H1 (cell line): ENCODE measurements at regions of chr5 and their contacts with region 1.

Region 1: GRCh38 chr5:134145779-134146581 is 30.8 kb downstream of the SKP1 start:
- DNase-seq: peak; percentile 53 to 94
- H3K4me3 ChIP-seq: no peak overlapping the region
- H3K27ac ChIP-seq: no peak overlapping the region
- H3K4me1 ChIP-seq: no peaks in the 10 kb centered on the region
- H3K27me3 ChIP-seq: no peaks in the 10 kb centered on the region
- CTCF ChIP-seq: peak in 2 of 3 experiments; percentile 95 to 99; a peak in 3 of 4 replicates
- EP300 ChIP-seq: no peak
- POLR2A ChIP-seq: no peak
- RAD21 ChIP-seq: peak; percentile 62 to 77

Region 2: GRCh38 chr5:133884569-133885311 is 261.2 kb before region 1 on chr5:
- CTCF ChIA-PET with region 1: no interaction called
- POLR2A ChIA-PET with region 1: no interaction called
- DNase-seq: no peak
- H3K4me3 ChIP-seq: no peak overlapping the region
- H3K27ac ChIP-seq: no peak overlapping the region
- H3K4me1 ChIP-seq: peaks cover 0 to 2% (median 0%) of the 10 kb centered on the region in 4 experiments; a peak in 1 of 7 replicates
- H3K27me3 ChIP-seq: no peaks in the 10 kb centered on the region
- CTCF ChIP-seq: no peak
- EP300 ChIP-seq: no peak
- POLR2A ChIP-seq: no peak
- RAD21 ChIP-seq: no peak

Region 3: GRCh38 chr5:134026521-134027268 is 119.3 kb before region 1 on chr5:
- CTCF ChIA-PET with region 1: interaction called, 19 read pairs
- POLR2A ChIA-PET with region 1: no interaction called
- DNase-seq: peak; percentile 66 to 67
- H3K4me3 ChIP-seq: no peak overlapping the region
- H3K27ac ChIP-seq: no peak overlapping the region
- H3K4me1 ChIP-seq: no peaks in the 10 kb centered on the region
- H3K27me3 ChIP-seq: no peaks in the 10 kb centered on the region
- CTCF ChIP-seq: peak; percentile 69 to 94 (median 90)
- EP300 ChIP-seq: no peak
- POLR2A ChIP-seq: no peak
- RAD21 ChIP-seq: peak; percentile 66 to 70

Region 4: GRCh38 chr5:134034326-134034725 is 111.7 kb before region 1 on chr5:
- CTCF ChIA-PET with region 1: interaction called, 629 read pairs
- POLR2A ChIA-PET with region 1: interaction called, 9 read pairs
- DNase-seq: no peak
- H3K4me3 ChIP-seq: no peak overlapping the region
- H3K27ac ChIP-seq: no peak overlapping the region
- H3K4me1 ChIP-seq: no peaks in the 10 kb centered on the region
- H3K27me3 ChIP-seq: no peaks in the 10 kb centered on the region
- CTCF ChIP-seq: no peak
- EP300 ChIP-seq: no peak
- POLR2A ChIP-seq: no peak
- RAD21 ChIP-seq: no peak

Region 5: GRCh38 chr5:134053840-134054338 is 92.1 kb before region 1 on chr5:
- CTCF ChIA-PET with region 1: interaction called, 629 read pairs
- POLR2A ChIA-PET with region 1: interaction called, 3 read pairs
- DNase-seq: no peak
- H3K4me3 ChIP-seq: no peak overlapping the region
- H3K27ac ChIP-seq: no peak overlapping the region
- H3K4me1 ChIP-seq: peaks cover 4 to 24% (median 15%) of the 10 kb centered on the region in 4 experiments
- H3K27me3 ChIP-seq: no peaks in the 10 kb centered on the region; a peak in 1 of 7 replicates
- CTCF ChIP-seq: no peak
- EP300 ChIP-seq: no peak
- POLR2A ChIP-seq: no peak
- RAD21 ChIP-seq: no peak

Region 6: DNA sequence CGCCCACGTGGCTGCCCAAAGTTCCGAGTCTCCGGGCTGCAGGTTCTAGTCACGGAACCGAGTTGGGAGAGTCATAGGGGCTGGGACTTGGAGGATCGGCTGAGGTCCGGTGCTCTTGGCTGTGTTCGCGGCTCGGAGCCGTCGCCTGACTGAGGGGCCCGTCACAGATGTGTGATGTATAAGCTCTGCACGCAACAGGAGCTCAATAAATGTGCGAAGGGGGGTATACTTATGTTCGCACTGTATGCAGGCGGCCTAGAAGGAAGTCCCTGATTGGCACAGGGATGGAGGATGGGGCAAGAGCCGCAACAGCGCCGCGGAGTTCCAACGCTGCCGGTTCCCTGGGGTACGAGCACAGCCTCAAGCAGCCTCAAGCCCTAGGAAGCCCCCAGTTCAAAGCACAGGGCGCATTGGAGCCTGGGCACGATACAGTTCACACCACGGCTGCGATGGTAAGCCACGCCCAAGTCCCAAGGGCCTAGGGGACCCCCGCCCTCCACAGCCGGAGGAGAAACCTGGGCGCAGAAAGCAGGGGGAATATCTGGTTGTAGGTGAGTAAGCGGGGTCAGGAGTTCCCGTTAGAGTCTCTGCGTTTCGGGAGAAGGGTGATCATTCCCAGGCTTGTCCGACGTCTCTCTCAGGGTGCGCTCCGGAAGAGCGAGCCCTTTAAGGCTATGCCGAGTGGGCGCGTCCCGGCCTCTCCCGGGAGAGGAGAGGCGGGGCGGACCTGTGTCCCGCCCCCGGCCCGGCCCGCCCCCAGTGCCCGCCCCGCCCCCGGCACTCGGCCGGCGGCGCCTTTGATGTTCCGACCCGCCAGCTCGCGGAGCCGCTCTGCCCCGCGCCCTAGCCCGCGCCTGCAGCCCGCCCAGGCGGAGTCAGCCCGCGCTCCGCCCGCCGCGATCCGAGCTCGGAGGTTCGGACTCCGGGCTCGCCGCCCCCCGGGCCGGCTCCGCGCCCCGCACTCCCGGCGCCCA is 31.8 kb before region 1 on chr5 and contains the start of gene TCF7:
- CTCF ChIA-PET with region 1: interaction called, 270 read pairs
- POLR2A ChIA-PET with region 1: interaction called, 3 read pairs
- DNase-seq: peak; percentile 59 to 79
- H3K4me3 ChIP-seq: peak within 1 kb of the TSS; percentile 62 to 89 (median 77)
- H3K27ac ChIP-seq: no peak within 1 kb of the TSS
- H3K4me1 ChIP-seq: peaks cover 0 to 15% (median 9%) of the 10 kb centered on the region in 4 experiments; a peak in 6 of 7 replicates
- H3K27me3 ChIP-seq: peaks cover 20 to 35% (median 32%) of the 10 kb centered on the region in 4 experiments
- CTCF ChIP-seq: no peak
- EP300 ChIP-seq: no peak
- POLR2A ChIP-seq: peak in 1 of 2 experiments; percentile 79; a peak in 2 of 3 replicates
- RAD21 ChIP-seq: no peak
- total RNA-seq, gene TCF7: 6.8 and 8.5 TPM in 2 replicates

Region 7: GRCh38 chr5:134289509-134290113 is 143.6 kb after region 1 on chr5:
- CTCF ChIA-PET with region 1: interaction called, 10 read pairs
- POLR2A ChIA-PET with region 1: no interaction called
- DNase-seq: peak; percentile 46 to 59
- H3K4me3 ChIP-seq: no peak overlapping the region
- H3K27ac ChIP-seq: no peak overlapping the region
- H3K4me1 ChIP-seq: no peaks in the 10 kb centered on the region
- H3K27me3 ChIP-seq: no peaks in the 10 kb centered on the region
- CTCF ChIP-seq: peak in 2 of 3 experiments; percentile 81 to 92; a peak in 3 of 4 replicates
- EP300 ChIP-seq: no peak
- POLR2A ChIP-seq: no peak
- RAD21 ChIP-seq: peak; percentile 98 to 99

Region 8: DNA sequence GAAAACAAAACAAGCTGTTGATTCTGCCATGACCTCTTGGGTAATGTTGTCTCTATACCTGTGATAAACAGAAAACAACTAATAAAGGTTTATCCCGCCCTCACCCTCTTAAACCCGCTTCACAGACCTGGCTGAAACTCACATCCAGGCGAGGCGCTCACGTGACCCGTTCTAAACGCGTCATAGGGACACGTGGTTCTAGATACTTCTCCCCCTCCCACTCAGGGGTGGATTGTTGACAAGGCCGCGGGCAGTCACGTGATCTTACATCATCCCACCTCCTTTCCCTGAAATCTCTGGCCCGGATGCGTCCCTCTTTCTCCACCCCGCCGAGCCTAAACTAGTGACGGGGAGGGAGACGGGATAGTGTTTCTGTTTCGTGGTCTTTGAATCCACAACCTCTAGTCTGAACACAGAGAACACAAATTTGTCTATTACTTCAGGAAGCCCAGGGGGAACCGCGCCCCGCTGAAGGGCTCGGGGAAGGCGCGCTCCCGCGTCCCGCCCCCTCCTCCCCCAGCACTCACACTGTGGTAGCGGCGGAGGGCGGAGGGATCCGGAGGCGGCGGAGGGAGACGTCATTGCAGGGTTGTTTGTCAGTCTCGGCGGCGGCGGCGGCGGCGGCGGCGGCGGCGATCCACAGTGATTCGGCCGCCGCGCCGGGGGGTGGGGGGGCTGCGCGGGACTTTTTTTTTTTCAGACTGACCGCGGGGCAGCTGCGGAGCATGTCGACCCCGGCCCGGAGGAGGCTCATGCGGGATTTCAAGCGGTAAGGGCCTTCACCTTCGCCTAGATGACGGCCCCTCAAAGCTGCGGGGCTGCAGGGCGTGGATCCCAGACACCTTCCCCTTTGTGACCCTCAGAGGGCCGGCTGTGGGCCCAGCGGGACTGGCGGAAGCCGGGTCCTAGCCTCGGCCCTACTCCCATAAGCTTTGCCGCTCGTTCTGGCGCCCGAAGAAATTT is 225.2 kb after region 1 on chr5 and contains the start of gene UBE2B:
- CTCF ChIA-PET with region 1: no interaction called
- POLR2A ChIA-PET with region 1: no interaction called
- DNase-seq: peak; percentile 92 to 97
- H3K4me3 ChIP-seq: peak within 1 kb of the TSS; percentile 83 to 97 (median 91)
- H3K27ac ChIP-seq: peak within 1 kb of the TSS; percentile 98
- H3K4me1 ChIP-seq: no peaks in the 10 kb centered on the region; a peak in 3 of 7 replicates
- H3K27me3 ChIP-seq: no peaks in the 10 kb centered on the region
- CTCF ChIP-seq: no peak
- EP300 ChIP-seq: peak in 1 of 2 experiments; percentile 99; a peak in 2 of 3 replicates
- POLR2A ChIP-seq: peak; percentile 24 to 68
- RAD21 ChIP-seq: no peak
- total RNA-seq, gene UBE2B: 40.3 and 46.8 TPM in 2 replicates

Region 9: GRCh38 chr5:134406390-134406789 is 260.4 kb after region 1 on chr5:
- CTCF ChIA-PET with region 1: no interaction called
- POLR2A ChIA-PET with region 1: no interaction called
- DNase-seq: no peak
- H3K4me3 ChIP-seq: no peak overlapping the region
- H3K27ac ChIP-seq: no peak overlapping the region
- H3K4me1 ChIP-seq: peaks cover 0 to 5% (median 3%) of the 10 kb centered on the region in 4 experiments; a peak in 3 of 7 replicates
- H3K27me3 ChIP-seq: no peaks in the 10 kb centered on the region
- CTCF ChIP-seq: no peak
- EP300 ChIP-seq: no peak
- POLR2A ChIP-seq: no peak
- RAD21 ChIP-seq: no peak

Region 10: DNA sequence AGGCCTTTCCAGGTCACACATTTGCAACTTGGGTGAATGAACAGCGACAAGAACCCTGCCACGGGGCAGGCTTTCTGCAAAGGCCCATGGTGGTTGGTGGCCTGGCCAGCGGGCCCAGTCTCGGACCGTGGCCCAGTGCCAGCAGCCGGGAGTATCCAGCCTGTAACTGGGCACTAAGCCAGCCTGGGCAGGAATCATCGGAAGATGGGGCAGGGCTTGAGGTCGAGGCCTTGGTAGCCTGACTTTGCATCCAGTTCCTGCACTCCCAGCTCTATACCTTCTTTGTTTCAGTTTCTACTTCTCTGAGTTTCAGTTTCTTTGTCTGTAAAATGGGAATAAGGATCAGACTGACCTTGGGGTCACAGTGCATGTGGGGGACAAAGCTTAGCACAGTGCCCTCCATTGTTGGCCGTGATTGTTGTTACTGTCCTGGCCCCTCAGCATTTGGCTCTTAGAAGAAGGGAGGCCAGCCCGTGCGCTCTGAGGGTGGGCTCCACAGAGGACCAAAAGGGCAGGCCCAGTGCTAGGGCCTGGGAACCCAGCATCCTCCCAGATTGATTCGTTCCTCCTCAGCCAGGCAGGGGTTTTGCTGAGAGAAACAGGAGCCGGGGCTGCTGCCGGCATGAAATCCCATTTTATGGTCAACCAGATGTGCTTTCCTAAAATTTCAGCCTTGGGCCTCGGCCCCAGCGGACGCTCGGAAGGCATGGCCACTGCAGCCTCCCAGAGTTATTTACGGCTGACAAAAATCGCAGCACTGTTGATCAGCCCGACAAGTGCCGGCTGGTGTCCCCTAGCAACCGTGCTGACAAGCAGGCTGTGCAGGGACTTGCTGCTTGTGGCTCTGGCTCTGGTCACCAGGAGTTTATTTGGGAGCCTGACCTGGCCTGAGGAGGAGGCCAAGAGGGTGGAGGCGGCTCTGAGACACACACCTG is 423.0 kb after region 1 on chr5:
- CTCF ChIA-PET with region 1: no interaction called
- POLR2A ChIA-PET with region 1: no interaction called
- DNase-seq: no peak
- H3K4me3 ChIP-seq: no peak overlapping the region
- H3K27ac ChIP-seq: no peak overlapping the region; the same call in 1 of the 2 replicates
- H3K4me1 ChIP-seq: no peaks in the 10 kb centered on the region
- H3K27me3 ChIP-seq: no peaks in the 10 kb centered on the region
- CTCF ChIP-seq: no peak
- EP300 ChIP-seq: no peak
- POLR2A ChIP-seq: no peak
- RAD21 ChIP-seq: no peak